SK-N-SH (cell line): ENCODE measurements at regions of chr17 and their contacts with region 1.

Region 1: DNA sequence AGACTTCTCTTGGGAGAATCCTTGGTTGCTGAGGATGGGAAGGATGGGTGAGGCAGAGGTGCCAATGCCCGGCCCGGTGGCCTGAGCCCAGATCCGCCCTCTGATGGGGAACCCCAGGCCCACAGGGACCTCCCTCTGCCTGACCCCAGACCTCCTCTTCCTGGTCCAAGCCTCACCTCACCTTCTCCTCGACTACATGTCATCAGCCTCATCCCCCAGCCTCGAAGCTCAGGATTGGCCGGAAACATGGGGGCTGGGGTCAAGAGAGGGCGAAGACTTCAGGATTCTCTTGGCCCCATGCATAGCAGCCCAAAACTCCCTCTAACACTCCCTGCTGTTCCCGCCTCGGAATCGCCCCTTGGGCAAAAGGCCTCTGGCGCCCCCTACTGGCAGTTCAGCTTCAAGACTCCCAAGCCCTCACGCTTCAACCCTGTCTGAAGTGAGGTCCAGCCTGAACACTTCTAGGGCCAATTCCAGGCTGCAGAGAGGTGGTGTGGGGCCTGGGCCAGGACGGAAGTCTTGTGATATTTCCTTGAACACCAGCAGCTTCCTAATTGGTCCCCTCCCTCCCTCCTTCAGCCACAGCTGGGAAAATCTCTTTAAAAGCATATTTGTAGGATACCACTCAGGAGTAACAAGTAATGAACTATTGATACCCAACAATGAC is 47.2 kb downstream of the ARHGAP27 start:
- DNase-seq: peak; percentile 87
- H3K4me3 ChIP-seq: peak overlapping the region in 1 of 2 experiments; percentile 21; a peak in 1 of 4 replicates
- H3K27ac ChIP-seq: no peak overlapping the region
- H3K4me1 ChIP-seq: peaks cover 0 to 6% of the 10 kb centered on the region in 2 experiments; a peak in 1 of 4 replicates
- H3K27me3 ChIP-seq: no peaks in the 10 kb centered on the region
- CTCF ChIP-seq: peak; percentile 97
- EP300 ChIP-seq: no peak
- RAD21 ChIP-seq: peak; percentile 97

Region 2: DNA sequence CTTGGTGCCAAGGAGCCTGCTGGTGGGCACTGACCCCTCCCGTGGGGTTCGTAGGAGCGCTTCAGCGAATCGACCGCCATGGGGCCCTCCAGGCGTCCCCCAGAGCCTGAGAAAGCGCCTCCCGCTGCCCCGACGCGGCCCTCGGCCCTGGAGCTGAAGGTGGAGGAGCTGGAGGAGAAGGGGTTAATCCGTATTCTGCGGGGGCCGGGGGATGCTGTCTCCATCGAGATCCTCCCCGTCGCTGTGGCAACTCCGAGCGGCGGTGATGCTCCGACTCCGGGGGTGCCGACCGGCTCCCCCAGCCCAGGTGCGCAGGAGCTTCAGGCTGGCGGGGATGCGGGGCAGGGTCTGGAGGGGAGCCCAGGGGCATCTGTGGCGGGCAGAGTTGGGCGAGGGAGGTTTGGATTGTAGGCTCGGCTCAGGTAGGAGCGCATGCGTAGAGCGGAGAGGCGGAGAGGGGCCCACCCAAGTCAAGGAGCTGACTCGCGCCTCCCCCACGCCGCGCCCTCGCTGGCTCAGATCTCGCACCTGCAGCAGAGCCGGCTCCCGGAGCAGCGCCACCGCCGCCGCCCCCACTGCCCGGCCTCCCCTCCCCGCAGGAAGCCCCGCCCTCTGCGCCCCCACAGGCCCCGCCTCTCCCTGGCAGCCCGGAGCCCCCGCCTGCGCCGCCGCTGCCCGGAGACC is 144.0 kb before region 1 on chr17:
- CTCF ChIA-PET with region 1: interaction called, 132 read pairs
- POLR2A ChIA-PET with region 1: interaction called, 4 read pairs
- DNase-seq: peak; percentile 88
- H3K4me3 ChIP-seq: peak overlapping the region; percentile 57 to 60
- H3K27ac ChIP-seq: peak overlapping the region in 1 of 2 experiments; percentile 44; a peak in 1 of 4 replicates
- H3K4me1 ChIP-seq: peaks cover 0 to 19% of the 10 kb centered on the region in 2 experiments; a peak in 1 of 4 replicates
- H3K27me3 ChIP-seq: no peaks in the 10 kb centered on the region
- CTCF ChIP-seq: no peak
- EP300 ChIP-seq: no peak
- RAD21 ChIP-seq: no peak

Region 3: GRCh38 chr17:45277216-45277849 is 108.1 kb before region 1 on chr17:
- CTCF ChIA-PET with region 1: interaction called, 51 read pairs
- POLR2A ChIA-PET with region 1: interaction called, 4 read pairs
- DNase-seq: peak; percentile 67
- H3K4me3 ChIP-seq: no peak overlapping the region; a peak in 1 of 4 replicates
- H3K27ac ChIP-seq: peak overlapping the region in 1 of 2 experiments; percentile 63; a peak in 2 of 4 replicates
- H3K4me1 ChIP-seq: peaks cover 6% of the 10 kb centered on the region in 2 experiments; a peak in 2 of 4 replicates
- H3K27me3 ChIP-seq: no peaks in the 10 kb centered on the region
- CTCF ChIP-seq: peak; percentile 71
- EP300 ChIP-seq: no peak
- RAD21 ChIP-seq: peak; percentile 78

Region 4: DNA sequence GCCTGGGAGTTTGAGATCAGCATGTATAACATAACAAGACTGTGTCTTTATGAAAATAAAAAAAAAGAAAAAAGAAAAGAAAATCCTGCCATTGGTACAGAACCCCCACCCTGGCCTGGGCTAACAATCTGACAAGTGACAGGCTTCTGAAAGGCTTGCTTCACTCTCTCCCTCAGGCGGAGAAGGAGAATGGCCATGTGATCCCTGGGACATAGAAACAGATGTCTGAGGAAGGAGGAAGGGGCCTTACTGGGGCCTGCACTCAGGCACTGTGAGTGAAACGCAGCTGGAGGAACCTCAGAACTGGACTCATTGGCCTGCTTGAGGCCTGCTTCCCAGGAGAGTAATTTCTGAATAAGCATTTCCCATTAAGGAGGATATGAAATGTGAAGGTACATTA is 86.1 kb before region 1 on chr17:
- CTCF ChIA-PET with region 1: interaction called, 13 read pairs
- POLR2A ChIA-PET with region 1: no interaction called
- DNase-seq: peak; percentile 65
- H3K4me3 ChIP-seq: no peak overlapping the region
- H3K27ac ChIP-seq: peak overlapping the region; percentile 66 to 95
- H3K4me1 ChIP-seq: peaks cover 45 to 52% of the 10 kb centered on the region in 2 experiments
- H3K27me3 ChIP-seq: no peaks in the 10 kb centered on the region
- CTCF ChIP-seq: no peak
- EP300 ChIP-seq: peak in 1 of 2 experiments; percentile 30; a peak in 1 of 4 replicates
- RAD21 ChIP-seq: no peak

Region 5: DNA sequence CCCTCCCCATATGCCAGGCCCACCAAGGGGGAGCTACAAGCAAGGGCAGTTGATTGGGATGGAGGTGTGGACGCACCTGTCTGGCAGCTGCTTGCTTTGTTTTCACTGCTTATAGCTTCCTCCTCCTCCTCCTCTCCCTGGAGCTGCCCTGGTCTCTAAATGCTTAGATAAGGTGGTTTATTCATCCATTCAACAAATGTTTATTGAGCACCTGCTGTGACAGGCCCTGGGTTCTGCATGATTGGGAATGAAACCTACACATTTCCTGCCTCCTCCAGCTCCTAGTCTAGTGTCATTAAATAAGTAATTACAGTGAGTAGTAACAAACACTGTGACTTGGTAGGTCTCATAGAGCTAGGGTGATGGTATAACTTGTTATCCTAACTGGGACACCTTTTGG is 51.2 kb before region 1 on chr17:
- CTCF ChIA-PET with region 1: interaction called, 11 read pairs
- POLR2A ChIA-PET with region 1: no interaction called
- DNase-seq: no peak
- H3K4me3 ChIP-seq: no peak overlapping the region
- H3K27ac ChIP-seq: no peak overlapping the region
- H3K4me1 ChIP-seq: peaks cover 7 to 18% of the 10 kb centered on the region in 2 experiments; a peak in 3 of 4 replicates
- H3K27me3 ChIP-seq: no peaks in the 10 kb centered on the region
- CTCF ChIP-seq: no peak
- EP300 ChIP-seq: no peak
- RAD21 ChIP-seq: no peak

Region 6: DNA sequence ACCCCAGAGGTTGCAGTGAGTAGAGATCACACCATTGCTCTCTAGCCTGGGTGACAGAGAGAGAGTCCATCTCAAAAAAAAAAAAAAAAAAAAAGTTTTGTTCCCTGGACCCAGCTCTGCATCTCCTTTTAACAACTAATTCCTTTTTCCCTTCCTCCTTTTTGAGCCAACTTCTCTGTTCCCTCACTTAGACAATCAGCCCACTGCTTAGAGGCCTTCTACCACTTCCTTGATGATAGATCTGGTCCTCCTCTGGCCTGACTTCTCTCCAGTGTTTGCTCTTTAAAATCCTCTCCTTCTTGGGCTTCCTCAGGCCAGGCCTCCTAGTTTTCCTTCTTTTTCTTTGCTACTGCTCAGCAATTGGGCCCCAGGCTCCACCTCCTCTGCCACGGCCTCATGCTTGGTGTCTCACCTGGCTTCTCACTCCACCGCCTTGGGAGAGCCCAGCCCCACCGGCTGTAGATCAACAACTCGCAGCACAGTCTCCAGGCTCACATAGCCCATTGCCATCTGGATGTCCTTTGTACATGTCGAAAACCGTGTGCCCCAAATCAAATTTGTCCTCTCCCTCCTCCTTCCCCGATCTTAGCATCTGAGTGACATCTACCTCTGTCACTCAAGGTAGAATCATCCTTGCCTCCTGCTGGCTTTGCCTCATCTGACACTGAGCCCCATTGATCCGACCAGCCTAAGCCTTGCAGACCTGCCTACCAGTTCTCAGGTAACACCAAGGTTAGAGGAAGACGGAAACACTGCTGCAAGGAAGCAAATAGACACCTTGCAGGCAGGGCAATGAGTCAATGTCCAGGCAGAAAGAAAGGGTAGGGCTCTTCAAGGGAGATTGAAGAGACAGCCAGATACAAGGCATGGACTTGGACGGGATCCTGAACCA is 29.8 kb after region 1 on chr17:
- CTCF ChIA-PET with region 1: no interaction called
- POLR2A ChIA-PET with region 1: no interaction called
- DNase-seq: no peak
- H3K4me3 ChIP-seq: no peak overlapping the region
- H3K27ac ChIP-seq: no peak overlapping the region
- H3K4me1 ChIP-seq: peaks cover 0 to 8% of the 10 kb centered on the region in 2 experiments; a peak in 1 of 4 replicates
- H3K27me3 ChIP-seq: no peaks in the 10 kb centered on the region
- CTCF ChIP-seq: no peak
- EP300 ChIP-seq: no peak
- RAD21 ChIP-seq: no peak

Region 7: DNA sequence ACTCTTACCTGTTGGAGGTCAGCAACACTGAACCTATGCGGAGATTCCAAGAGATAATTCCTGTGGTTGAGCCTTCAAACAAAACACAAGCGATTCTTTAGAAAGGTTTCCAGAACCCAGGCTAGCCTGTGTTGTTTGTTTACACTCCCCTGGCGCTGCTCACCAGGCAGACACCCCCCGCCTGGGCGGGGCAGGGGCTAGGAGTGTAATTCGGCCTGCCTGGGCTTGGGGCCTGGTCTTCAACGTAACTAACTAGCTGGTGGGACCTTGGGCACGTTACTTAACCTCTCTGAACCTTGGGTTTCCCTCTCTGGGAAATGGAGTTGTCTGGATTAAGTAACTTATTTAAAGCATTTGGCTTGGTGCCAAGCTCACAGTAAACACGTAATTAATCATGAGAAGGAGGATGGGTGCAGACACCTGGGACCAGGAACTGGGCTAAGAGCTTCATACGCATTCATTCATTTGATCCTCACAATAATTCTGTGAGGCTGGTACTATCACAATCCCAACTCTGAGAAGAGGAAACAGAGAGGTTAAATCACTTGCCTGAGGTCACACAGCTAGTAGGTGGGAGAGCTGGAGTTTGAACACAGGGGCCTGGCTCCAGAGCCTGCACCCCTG is 54.8 kb after region 1 on chr17:
- CTCF ChIA-PET with region 1: no interaction called
- POLR2A ChIA-PET with region 1: no interaction called
- DNase-seq: no peak
- H3K4me3 ChIP-seq: no peak overlapping the region
- H3K27ac ChIP-seq: no peak overlapping the region; a peak in 1 of 4 replicates
- H3K4me1 ChIP-seq: peaks cover 0 to 59% of the 10 kb centered on the region in 2 experiments; a peak in 1 of 4 replicates
- H3K27me3 ChIP-seq: no peaks in the 10 kb centered on the region
- CTCF ChIP-seq: no peak
- EP300 ChIP-seq: no peak
- RAD21 ChIP-seq: no peak